Cardiac septum (tissue), 1 donor: ENCODE measurements at regions of chr1 and their contacts with region 1.

Region 1: GRCh38 chr1:39091845-39092645 is 65.9 kb downstream of the NDUFS5 start:
- DNase-seq: peak; percentile 79

Region 2: DNA sequence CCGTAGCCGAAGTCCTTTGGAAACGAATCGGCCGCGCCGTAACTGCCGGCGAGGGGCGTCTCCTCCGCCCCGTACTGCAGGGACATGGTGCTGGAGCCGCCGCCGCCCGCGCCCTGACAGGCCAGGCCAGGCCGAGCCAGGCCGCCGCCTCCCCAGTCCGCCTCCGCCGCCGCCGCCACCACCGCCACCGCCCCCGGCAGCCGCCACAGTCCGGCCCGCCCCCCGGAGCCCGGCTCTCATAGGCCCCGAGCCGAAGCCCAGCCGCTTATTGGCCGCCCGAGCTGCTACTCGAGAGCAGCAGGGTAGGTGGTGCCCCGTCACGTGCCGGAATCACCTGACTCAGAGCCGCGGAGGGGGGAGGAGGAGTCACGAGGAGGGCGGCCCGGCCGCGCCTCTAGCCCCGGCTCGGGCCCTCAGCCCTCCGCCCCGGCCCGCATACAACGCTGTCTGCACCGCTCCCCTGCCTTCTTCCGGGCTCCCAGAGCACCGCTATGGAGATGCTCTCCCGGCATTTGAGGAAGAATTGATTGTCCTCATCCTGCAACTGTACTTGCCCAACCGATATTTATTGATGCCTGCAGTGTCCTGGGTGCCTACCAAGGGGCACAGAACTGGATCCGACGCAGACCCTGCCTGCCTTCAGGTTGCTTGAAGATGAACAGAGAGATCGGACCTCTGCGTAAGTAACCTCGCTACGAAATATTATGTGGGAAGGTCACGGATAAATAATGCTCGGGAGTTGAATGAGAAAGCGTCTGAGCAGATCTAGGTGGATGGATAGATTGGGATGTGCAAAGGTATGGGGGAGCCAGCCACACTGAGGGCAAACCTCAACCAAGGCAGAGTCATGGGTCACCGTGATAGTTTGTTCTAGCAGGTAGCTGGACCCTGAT is 232.2 kb before region 1 on chr1 and contains the start of gene RRAGC:
- intact Hi-C with region 1: loop called (anchors 5 kb)
- DNase-seq: peak; percentile 100
- total RNA-seq, gene RRAGC: 23.6 TPM

Region 3: GRCh38 chr1:39142401-39143151 is 50.5 kb after region 1 on chr1:
- intact Hi-C with region 1: no loop called
- DNase-seq: no peak